Cardiac septum (tissue), 1 donor: ENCODE measurements at regions of chr13 and their contacts with region 1.

Region 1: DNA sequence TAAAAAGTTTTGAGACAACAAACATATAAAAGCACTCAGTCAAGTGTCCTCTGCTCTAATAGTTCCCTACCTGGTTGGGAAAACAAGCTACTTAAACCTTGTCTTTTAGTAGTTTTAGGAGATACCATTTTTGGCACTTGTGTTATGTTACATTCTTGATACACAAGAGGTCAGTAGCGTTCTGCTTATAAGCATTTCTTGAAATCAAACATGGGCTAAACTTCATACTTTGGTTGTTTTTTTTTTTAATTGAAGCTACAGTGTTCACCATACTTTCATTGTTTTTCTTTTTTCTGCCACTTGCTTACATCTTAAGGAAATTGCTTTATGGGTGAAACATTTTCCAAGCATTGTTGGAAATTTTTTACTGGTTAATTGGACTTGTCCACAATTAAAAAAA is 12.9 kb downstream of the NHLRC3 start:
- DNase-seq: no peak

Region 2: GRCh38 chr13:39132286-39133230 is 81.4 kb after region 1 on chr13:
- intact Hi-C with region 1: no loop called
- DNase-seq: no peak

Region 3: GRCh38 chr13:39616087-39616694 is 565.0 kb after region 1 on chr13:
- intact Hi-C with region 1: loop called (anchors 5 kb)
- DNase-seq: no peak

Region 4: DNA sequence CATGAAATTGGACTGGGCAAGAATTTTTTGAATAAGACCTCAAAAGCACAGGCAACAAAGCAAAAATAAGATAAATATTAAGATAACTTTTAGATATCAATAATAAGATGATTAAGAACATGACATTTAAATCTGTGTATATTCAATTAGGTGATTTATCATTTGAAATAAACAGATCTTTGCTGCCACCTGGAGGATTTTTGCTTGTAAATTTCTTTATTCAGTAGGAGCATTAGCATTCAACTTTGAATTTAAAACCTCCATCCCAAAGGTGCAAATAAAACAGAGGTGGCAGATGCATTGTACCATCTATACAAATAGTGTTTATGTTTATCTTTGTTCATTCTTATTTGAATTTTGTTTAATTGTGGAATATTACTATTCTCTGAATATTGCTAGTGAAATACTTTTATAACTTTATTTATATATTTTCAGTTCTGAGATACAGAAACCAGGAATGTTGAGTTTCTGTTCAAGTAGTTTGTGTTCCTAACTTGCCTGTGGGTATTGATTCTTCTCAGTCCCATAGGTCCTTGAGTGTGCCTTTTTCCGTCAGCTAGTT is 625.2 kb after region 1 on chr13:
- intact Hi-C with region 1: loop called (anchors 5 kb)
- DNase-seq: no peak